A549 (cell line): ENCODE measurements at regions of chr12 and their contacts with region 1.

Region 1: DNA sequence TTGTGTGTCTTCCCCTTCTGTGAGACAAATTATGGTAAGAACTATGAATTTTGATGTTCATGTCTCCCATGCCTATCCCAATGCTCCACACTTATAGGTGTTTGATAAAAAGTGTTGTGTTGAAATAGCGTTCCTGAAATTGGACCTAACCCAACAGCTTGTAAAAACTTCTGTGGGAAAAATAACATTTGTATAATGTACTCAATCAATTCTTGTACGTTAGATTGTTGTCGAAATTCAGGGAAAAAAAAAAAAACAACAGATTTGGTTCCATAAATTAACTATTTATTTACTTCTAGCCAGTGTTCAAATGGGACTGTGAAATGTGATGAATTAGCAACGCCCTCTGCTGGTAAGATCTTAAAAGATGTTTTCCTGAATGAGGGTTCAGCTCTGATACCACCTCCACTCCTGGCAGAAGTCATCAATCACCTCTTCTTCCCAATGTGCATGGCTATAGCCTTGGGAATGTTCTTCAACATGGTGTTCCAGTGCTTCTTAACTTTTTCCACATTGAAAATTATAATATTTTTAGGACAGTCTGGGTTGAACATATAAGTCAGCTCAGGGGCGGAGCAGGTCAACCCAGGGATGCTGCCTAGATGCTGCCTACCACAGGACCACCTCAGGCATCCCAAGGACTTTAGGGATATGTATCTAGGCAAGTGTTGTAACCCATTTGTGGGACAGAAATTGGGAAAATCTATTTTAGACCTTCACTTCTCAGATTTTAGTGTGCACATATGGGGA is 170.6 kb downstream of the OTOGL start:
- DNase-seq: peak; percentile 14 to 55
- ATAC-seq: peak; percentile 78 to 90
- H3K4me3 ChIP-seq: no peak overlapping the region
- H3K27ac ChIP-seq: no peak overlapping the region
- H3K4me1 ChIP-seq: peaks cover 15% of the 10 kb centered on the region
- CTCF ChIP-seq: peak; percentile 86
- EP300 ChIP-seq: no peak
- POLR2A ChIP-seq: no peak
- RAD21 ChIP-seq: peak; percentile 76 to 80

Region 2: DNA sequence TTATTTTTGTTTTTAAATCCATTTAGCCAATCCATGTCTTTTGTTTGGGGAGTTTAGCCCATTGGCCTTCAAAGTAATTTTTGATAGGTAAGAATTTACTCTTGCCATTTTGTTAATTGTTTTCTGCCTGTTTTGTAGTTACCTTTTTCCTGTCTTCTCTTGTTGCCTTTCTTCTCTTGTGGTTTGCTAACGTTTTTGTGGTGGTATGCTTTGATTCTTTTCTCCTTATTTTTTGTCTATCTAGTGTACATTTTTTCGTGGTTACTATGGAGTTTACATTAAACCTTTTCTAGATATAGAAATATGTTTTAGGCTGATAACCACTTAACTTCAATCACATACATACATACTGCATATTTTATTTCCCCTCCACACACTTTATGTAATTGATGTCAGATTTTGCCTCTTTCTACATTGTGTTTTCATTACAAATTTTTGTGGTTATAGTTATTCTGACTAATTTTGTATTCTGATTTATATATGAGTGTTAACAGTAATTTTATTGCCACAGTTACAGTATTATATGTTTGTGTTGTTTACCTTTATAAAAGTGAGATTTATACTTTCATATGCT is 315.9 kb before region 1 on chr12:
- CTCF ChIA-PET with region 1: interaction called, 10 read pairs
- POLR2A ChIA-PET with region 1: no interaction called
- DNase-seq: no peak
- ATAC-seq: no peak
- H3K4me3 ChIP-seq: no peak overlapping the region
- H3K27ac ChIP-seq: no peak overlapping the region
- H3K4me1 ChIP-seq: no peaks in the 10 kb centered on the region
- CTCF ChIP-seq: no peak
- EP300 ChIP-seq: no peak
- POLR2A ChIP-seq: no peak
- RAD21 ChIP-seq: no peak

Region 3: DNA sequence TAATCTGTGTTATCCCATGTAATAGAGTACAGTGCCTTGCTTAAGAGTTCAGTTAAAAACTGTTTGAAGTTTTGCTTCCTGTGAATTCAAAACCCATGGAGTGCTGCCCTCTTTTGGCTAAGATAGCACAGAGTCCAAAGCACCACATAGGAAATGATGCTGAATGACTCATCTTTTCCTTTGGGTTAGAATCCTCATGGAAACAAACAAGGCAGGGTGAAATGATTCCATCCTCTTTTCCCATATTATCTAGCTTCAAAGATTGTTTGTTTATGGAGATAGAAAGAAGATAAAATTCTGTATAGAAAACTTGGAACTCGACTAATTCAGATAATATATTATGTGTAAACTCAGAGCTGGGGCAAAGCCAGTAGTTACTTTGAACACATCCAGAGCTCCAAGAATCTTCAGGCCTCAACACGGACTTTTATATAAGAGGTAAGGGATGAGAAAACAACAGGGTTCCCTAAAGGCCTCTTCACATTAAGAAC is 83.2 kb before region 1 on chr12:
- CTCF ChIA-PET with region 1: interaction called, 23 read pairs
- POLR2A ChIA-PET with region 1: no interaction called
- DNase-seq: peak; percentile 52 to 86
- ATAC-seq: peak; percentile 97
- H3K4me3 ChIP-seq: no peak overlapping the region
- H3K27ac ChIP-seq: peak overlapping the region in 1 of 2 experiments; percentile 9; a peak in 2 of 6 replicates
- H3K4me1 ChIP-seq: peaks cover 3% of the 10 kb centered on the region; the same call in 1 of the 3 replicates
- CTCF ChIP-seq: peak; percentile 85
- EP300 ChIP-seq: no peak
- POLR2A ChIP-seq: no peak
- RAD21 ChIP-seq: peak; percentile 79 to 83

Region 4: GRCh38 chr12:80195074-80195726 is 74.8 kb before region 1 on chr12:
- CTCF ChIA-PET with region 1: interaction called, 44 read pairs
- POLR2A ChIA-PET with region 1: interaction called, 6 read pairs
- DNase-seq: peak; percentile 39 to 69
- ATAC-seq: peak; percentile 88 to 92
- H3K4me3 ChIP-seq: no peak overlapping the region
- H3K27ac ChIP-seq: no peak overlapping the region
- H3K4me1 ChIP-seq: no peaks in the 10 kb centered on the region
- CTCF ChIP-seq: peak; percentile 54
- EP300 ChIP-seq: no peak
- POLR2A ChIP-seq: no peak
- RAD21 ChIP-seq: peak; percentile 50 to 56

Region 5: DNA sequence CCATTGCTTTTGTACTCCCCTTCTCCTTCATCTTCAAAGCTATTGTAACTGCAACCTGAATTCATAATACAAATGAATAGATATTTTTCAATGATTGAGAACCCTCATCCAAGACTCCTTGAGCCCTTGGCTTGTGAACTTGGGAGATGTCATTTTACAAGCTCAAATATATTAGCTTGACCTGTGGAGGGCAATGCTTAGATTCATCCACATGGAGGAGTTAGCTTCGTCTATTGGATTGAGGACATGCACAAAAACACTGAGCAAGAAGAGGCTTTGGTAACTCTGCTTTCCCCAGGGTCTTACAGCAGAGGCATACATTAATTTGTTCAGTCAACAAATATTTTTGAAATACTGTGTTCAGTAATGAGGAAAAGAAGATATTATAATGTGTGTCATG is 69.6 kb before region 1 on chr12:
- CTCF ChIA-PET with region 1: interaction called, 44 read pairs
- POLR2A ChIA-PET with region 1: interaction called, 6 read pairs
- DNase-seq: no peak
- ATAC-seq: no peak
- H3K4me3 ChIP-seq: no peak overlapping the region
- H3K27ac ChIP-seq: no peak overlapping the region
- H3K4me1 ChIP-seq: no peaks in the 10 kb centered on the region
- CTCF ChIP-seq: no peak
- EP300 ChIP-seq: no peak
- POLR2A ChIP-seq: no peak
- RAD21 ChIP-seq: no peak

Region 6: DNA sequence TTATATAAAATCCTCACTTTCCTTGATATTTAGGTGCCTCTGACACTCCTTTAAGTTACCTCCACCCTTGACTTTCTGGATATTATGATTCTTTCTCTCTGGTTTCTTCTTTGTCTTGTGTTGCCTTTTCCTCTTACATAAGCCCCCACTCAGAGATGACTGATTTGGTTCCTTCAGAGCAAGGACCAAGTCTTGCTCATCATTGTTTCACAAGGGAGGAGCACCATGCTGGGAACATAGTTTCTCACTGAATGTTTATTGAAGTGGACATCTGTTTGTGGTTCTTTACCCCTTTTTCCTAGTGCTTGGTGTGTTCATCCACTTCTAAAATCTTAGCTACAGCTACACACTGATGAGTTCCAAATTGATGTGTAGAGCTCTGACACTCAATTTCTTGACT is 12.8 kb after region 1 on chr12:
- CTCF ChIA-PET with region 1: interaction called, 10 read pairs
- POLR2A ChIA-PET with region 1: no interaction called
- DNase-seq: no peak
- ATAC-seq: no peak
- H3K4me3 ChIP-seq: no peak overlapping the region
- H3K27ac ChIP-seq: no peak overlapping the region
- H3K4me1 ChIP-seq: no peaks in the 10 kb centered on the region
- CTCF ChIP-seq: no peak
- EP300 ChIP-seq: no peak
- POLR2A ChIP-seq: no peak
- RAD21 ChIP-seq: no peak

Region 7: GRCh38 chr12:80412369-80412953 is 142.5 kb after region 1 on chr12:
- CTCF ChIA-PET with region 1: no interaction called
- POLR2A ChIA-PET with region 1: no interaction called
- DNase-seq: peak; percentile 19 to 65
- ATAC-seq: peak; percentile 70 to 89; a peak in 4 of 6 replicates
- H3K4me3 ChIP-seq: no peak overlapping the region
- H3K27ac ChIP-seq: no peak overlapping the region
- H3K4me1 ChIP-seq: no peaks in the 10 kb centered on the region
- CTCF ChIP-seq: peak; percentile 93
- EP300 ChIP-seq: no peak
- POLR2A ChIP-seq: no peak
- RAD21 ChIP-seq: peak; percentile 88 to 89